ENCODE measurements at regions of chr20 and their contacts with region 1.

Region 1: DNA sequence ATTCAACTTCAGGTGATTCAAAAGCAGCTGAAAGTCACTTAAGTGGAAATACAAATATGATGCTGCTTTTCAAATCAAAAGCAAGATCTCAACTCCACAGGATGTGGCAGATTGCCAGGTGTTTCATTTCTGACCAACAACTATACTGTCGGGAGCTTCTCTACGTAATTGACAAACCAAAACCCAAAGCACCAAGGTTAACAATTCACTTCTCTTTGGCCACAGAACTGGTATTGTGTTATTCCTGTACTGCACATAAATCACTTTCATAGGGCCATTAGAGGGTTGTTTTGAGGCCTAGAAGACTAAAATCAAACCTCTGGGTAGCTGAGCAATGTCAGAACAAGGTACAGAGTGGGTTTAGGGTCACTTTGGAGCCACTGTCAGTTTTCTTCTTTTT is 169.7 kb downstream of the HAO1 start:
- DNase-seq: peak; percentile 97
- H3K4me3 ChIP-seq: peak overlapping the region; percentile 41
- H3K27ac ChIP-seq: peak overlapping the region; percentile 99
- H3K4me1 ChIP-seq: peaks cover 67% of the 10 kb centered on the region
- CTCF ChIP-seq: no peak

Region 2: DNA sequence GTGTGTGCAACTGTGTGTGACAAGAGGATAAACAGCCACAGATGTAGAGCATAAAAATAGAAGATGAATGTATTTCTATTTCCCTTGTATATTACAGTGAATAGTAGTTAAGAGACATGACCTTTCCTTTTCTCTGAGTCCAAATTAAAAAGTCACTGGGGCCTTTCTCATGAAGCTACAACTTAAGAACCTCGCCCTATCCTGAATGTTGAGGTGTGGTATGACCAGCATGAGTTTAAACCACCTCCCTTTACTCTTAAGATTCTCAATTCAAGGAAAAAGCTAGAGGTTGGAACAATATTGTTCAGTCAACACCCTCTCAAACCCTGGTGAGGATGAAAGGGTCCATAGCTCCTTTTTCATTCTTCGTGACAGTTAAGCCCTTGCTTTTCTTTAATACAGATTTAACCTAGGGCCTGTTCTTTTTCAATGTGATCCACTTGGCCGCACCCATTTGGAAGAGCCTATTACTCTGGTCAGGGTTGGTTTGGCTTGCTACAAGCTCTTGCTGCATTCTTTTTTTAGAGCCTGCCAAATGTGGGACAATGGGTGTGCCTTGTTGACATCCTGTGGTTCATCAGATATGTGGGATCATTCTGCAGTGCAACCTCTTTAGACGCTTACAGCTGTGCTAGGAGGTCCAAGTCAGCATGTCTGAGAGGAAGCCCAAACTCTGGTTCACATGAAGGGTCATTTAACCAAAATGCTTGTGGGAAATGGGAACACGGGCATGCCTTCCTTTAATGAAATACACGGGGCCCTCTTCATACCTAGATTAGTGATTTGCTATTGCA is 120.3 kb before region 1 on chr20:
- CTCF ChIA-PET with region 1: no interaction called
- POLR2A ChIA-PET with region 1: interaction called, 7 read pairs
- intact Hi-C with region 1: loop called (anchors 5 kb)
- DNase-seq: peak; percentile 82
- H3K4me3 ChIP-seq: peak overlapping the region; percentile 22
- H3K27ac ChIP-seq: peak overlapping the region; percentile 94
- H3K4me1 ChIP-seq: peaks cover 38% of the 10 kb centered on the region
- CTCF ChIP-seq: no peak

Region 3: DNA sequence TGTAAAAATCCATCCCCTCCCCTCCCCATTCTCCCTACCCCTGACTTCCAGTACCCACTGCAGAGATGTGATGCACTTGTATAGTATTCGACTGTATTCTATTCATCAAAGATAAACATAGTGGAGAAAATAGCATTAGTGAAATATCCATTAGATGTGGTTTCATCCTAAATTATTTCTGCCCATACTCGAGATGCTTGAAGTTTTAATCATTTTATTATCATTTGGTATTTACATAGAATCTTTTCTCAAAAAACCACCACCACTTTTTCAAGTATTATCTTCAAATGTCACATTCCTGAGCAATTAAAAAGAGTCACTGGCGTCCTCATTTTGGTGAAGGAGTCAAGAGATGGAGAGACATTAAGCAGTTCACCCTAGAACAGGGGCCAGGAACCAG is 12.2 kb before region 1 on chr20:
- CTCF ChIA-PET with region 1: interaction called, 3 read pairs
- POLR2A ChIA-PET with region 1: interaction called, 32 read pairs
- intact Hi-C with region 1: loop called (anchors 2 kb)
- DNase-seq: no peak
- H3K4me3 ChIP-seq: no peak overlapping the region
- H3K27ac ChIP-seq: no peak overlapping the region
- H3K4me1 ChIP-seq: peaks cover 44% of the 10 kb centered on the region
- CTCF ChIP-seq: no peak

Region 4: GRCh38 chr20:8389381-8390036 is 618.9 kb after region 1 on chr20:
- CTCF ChIA-PET with region 1: no interaction called
- POLR2A ChIA-PET with region 1: no interaction called
- intact Hi-C with region 1: loop called (anchors 10 kb)
- DNase-seq: peak; percentile 75
- H3K4me3 ChIP-seq: no peak overlapping the region
- H3K27ac ChIP-seq: peak overlapping the region; percentile 9
- H3K4me1 ChIP-seq: peaks cover 87% of the 10 kb centered on the region
- CTCF ChIP-seq: peak; percentile 86

Measured in OCI-LY7 (cell line).